GM12878 (cell line): ENCODE measurements at regions of chr7 and their contacts with region 1.

Region 1: GRCh38 chr7:83486957-83487356 is 162.0 kb downstream of the SEMA3E start:
- DNase-seq: no peak
- ATAC-seq: peak; percentile 78
- H3K4me3 ChIP-seq: no peak overlapping the region
- H3K27ac ChIP-seq: no peak overlapping the region
- H3K4me1 ChIP-seq: no peaks in the 10 kb centered on the region; the same call in 1 of the 2 replicates
- H3K27me3 ChIP-seq: no peaks in the 10 kb centered on the region
- CTCF ChIP-seq: no peak
- EP300 ChIP-seq: no peak
- POLR2A ChIP-seq: no peak
- RAD21 ChIP-seq: no peak

Region 2: GRCh38 chr7:83178796-83179195 is 308.2 kb before region 1 on chr7:
- CTCF ChIA-PET with region 1: no interaction called
- POLR2A ChIA-PET with region 1: no interaction called
- RAD21 ChIA-PET with region 1: no interaction called
- SMC1A ChIA-PET with region 1: no interaction called
- in situ Hi-C with region 1: no loop called
- intact Hi-C with region 1: no loop called
- DNase-seq: no peak
- ATAC-seq: no peak
- H3K4me3 ChIP-seq: no peak overlapping the region
- H3K27ac ChIP-seq: no peak overlapping the region
- H3K4me1 ChIP-seq: no peaks in the 10 kb centered on the region
- H3K27me3 ChIP-seq: no peaks in the 10 kb centered on the region
- CTCF ChIP-seq: no peak
- EP300 ChIP-seq: no peak
- POLR2A ChIP-seq: no peak
- RAD21 ChIP-seq: no peak

Region 3: GRCh38 chr7:83509255-83510021 is 22.5 kb after region 1 on chr7:
- CTCF ChIA-PET with region 1: no interaction called
- POLR2A ChIA-PET with region 1: interaction called, 4 read pairs
- RAD21 ChIA-PET with region 1: no interaction called
- SMC1A ChIA-PET with region 1: interaction called, 11 read pairs
- in situ Hi-C with region 1: no loop called
- intact Hi-C with region 1: no loop called
- DNase-seq: peak; percentile 4
- ATAC-seq: peak; percentile 78
- H3K4me3 ChIP-seq: no peak overlapping the region
- H3K27ac ChIP-seq: no peak overlapping the region
- H3K4me1 ChIP-seq: no peaks in the 10 kb centered on the region
- H3K27me3 ChIP-seq: no peaks in the 10 kb centered on the region
- CTCF ChIP-seq: no peak
- EP300 ChIP-seq: no peak
- POLR2A ChIP-seq: no peak
- RAD21 ChIP-seq: no peak